Dorsolateral prefrontal cortex (tissue), 120 donors: ENCODE measurements at regions of chr4 and their contacts with region 1.

Region 1: DNA sequence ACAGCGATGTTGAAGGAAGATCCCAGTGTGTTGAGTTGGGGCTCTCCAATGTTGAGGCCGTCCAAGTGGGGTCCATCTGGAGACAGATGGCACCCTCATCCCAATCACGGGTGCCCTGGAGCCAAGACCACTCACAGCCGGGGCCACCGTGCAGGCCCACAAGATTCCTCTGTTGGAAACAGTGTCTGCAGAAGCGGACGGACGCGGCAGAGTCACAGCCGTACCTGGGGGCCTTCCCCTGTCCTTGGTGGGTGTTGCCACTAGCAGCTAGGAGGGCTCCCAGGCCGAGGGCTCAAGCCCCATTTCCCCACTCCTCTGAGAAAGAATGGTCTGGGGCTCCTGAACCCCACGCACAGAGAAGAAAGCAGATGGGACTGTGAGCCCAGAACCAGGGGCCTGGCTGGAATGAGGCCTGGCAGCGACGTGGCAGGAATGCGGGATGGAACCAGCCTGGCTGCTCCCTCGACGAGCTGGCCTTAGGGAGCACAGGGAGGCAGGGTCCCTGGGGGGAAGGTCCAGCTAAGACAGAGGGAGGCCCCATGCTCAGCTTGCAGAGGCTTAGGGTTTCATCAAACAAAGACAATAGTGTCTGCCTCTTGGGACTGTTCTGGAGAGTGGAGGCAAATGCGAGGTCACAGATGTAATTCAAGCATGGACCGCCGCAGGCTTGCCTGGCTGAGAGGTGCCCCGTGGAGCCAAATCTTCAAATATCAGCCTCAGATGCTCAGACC is 228.9 kb downstream of the AFAP1 start:
- DNase-seq: no peak
- H3K4me3 ChIP-seq: no peak overlapping the region
- H3K27ac ChIP-seq: peak overlapping the region in 1 of 59 donors; percentile 11
- H3K27me3 ChIP-seq: no peaks in the 10 kb centered on the region
- CTCF ChIP-seq: no peak

Region 2: DNA sequence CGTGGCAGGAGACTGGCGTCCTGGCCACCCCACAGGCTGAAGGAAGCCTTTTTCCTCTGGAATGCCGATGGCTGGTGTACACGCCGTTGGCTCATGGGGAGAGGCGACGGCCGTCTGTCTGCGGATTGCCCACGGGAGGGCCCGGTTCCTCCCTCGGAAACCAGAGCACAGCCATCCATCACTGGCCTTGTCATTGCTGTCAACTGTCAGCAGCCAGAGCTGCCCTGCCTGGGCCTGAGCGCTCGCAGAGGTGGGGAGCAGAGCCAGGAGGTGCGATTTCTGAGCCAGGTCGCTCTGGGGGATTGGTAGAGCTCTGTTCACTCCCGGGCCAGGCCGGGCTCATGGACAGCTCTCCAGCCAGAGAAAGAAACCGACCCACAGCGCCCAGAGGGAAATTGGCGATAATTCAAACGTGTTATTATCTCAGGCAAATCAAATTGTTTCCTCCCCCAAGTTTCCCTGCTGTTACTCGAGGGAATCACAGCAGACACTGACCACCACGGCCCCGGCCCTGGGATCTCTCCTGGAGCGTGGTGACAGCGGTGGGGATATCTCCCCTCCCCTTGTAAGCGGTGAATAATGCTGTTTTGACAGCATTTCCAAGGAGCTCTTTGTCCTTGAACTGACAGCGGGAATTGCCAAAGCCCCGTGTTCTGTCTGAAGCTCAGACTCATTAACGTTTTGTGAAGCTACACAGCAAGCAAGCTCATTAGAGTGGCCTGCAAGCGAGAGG is 55.1 kb before region 1 on chr4:
- intact Hi-C with region 1: loop called in 1 of 2 experiments (anchors 5 kb)
- DNase-seq: peak in 3 of 10 donors; percentile 36 to 60 (median 53)
- H3K4me3 ChIP-seq: peak overlapping the region in 15 of 59 donors; percentile 3 to 47 (median 15)
- H3K27ac ChIP-seq: peak overlapping the region in 18 of 59 donors; percentile 2 to 66 (median 42)
- H3K27me3 ChIP-seq: peaks cover 0 to 3% (median 0%) of the 10 kb centered on the region in 45 donors
- CTCF ChIP-seq: no peak

Region 3: DNA sequence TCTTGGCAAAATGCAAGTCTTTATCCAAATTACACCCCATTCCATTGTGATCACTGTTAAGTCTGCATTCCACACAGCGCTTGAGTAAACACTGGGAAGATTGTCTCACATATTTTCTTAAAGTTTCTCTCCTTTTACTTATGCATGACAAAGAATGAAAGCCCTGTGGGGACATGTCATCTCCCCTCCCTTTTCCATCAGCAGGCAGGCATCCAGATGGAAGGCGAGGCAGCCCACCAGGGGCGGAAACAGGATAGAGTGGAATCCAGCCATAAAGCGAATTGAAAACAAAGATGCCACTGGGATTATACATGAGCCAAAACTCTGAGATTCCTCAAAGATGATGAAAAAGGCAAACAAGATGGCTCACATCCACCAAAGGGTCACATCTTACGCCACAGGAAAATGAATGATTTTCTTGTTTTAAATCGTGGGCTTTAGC is 150.7 kb after region 1 on chr4:
- intact Hi-C with region 1: no loop called
- DNase-seq: no peak
- H3K4me3 ChIP-seq: peak overlapping the region in 1 of 59 donors; percentile 10
- H3K27ac ChIP-seq: peak overlapping the region in 8 of 59 donors; percentile 0 to 33 (median 16)
- H3K27me3 ChIP-seq: no peaks in the 10 kb centered on the region
- CTCF ChIP-seq: no peak